ENCODE measurements at regions of chr19 and their contacts with region 1.

Region 1: GRCh38 chr19:11380653-11381534 is 3.2 kb downstream of the EPOR start:
- DNase-seq: peak; percentile 99
- H3K4me3 Mint-ChIP-seq: peak overlapping the region; percentile 76
- H3K27ac Mint-ChIP-seq: peak overlapping the region; percentile 90
- H3K4me1 Mint-ChIP-seq: peaks cover 35% of the 10 kb centered on the region
- H3K27me3 Mint-ChIP-seq: no peaks in the 10 kb centered on the region
- CTCF ChIP-seq: peak; percentile 71

Region 2: DNA sequence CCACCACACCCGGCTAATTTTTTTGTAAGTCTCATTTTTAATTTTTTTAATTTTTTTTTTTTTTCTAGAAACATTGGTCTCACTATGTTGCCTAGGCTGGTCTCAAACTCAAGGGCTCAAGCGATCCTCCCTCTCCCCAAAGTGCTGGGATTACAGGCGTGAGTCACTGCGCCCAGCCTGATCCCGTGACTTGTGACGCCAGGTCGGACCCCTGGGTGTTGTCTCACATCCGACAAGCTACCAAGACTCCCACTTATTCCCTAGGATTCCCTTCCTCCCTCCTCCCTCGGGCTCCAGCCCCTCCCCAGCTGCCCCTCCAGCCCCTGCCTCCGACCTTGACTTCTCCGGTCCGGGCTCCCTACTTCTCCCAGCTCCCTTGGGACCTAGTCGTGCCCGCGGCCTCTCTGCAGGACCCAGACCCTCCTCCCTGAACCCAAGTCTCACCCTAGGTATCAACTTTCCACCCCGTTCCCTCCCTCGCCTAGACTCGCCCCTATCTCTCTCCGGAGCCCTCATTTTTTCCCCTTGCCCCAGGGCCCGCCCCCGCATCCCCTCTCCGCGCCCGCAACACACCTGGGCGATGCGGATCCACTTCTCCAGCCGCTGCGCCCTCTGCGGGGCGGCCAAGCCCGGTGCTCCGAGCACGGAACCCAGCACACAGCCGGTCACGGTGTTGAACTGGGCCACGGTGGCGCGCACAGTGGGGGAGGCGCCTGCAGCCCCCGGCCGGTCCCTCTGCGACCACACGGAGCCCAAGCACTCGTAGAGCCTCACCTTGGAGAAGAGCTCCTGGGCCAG is 25.2 kb after region 1 on chr19:
- CTCF ChIA-PET with region 1: interaction called, 13 read pairs
- POLR2A ChIA-PET with region 1: interaction called, 3 read pairs
- intact Hi-C with region 1: no loop called
- DNase-seq: peak; percentile 49
- H3K4me3 Mint-ChIP-seq: peak overlapping the region; percentile 41
- H3K27ac Mint-ChIP-seq: no peak overlapping the region
- H3K4me1 Mint-ChIP-seq: no peaks in the 10 kb centered on the region
- H3K27me3 Mint-ChIP-seq: no peaks in the 10 kb centered on the region
- CTCF ChIP-seq: peak; percentile 40

Region 3: GRCh38 chr19:11435058-11435832 is 54.4 kb after region 1 on chr19 and contains the starts of genes ODAD3 and PRKCSH:
- CTCF ChIA-PET with region 1: interaction called, 5 read pairs
- POLR2A ChIA-PET with region 1: interaction called, 11 read pairs
- intact Hi-C with region 1: loop called (anchors 2 kb)
- DNase-seq: peak; percentile 100
- H3K4me3 Mint-ChIP-seq: peak within 1 kb of the TSS; percentile 100
- H3K27ac Mint-ChIP-seq: peak within 1 kb of the TSS; percentile 96
- H3K4me1 Mint-ChIP-seq: no peaks in the 10 kb centered on the region
- H3K27me3 Mint-ChIP-seq: no peaks in the 10 kb centered on the region
- CTCF ChIP-seq: peak; percentile 87
- total RNA-seq, gene ODAD3: 0.30 TPM in 1 of 2 replicates, not detected in the other
- total RNA-seq, gene PRKCSH: 224 and 257 TPM in 2 replicates

Region 4: GRCh38 chr19:11482384-11483050 is 101.6 kb after region 1 on chr19:
- CTCF ChIA-PET with region 1: interaction called, 12 read pairs
- POLR2A ChIA-PET with region 1: interaction called, 6 read pairs
- intact Hi-C with region 1: no loop called
- DNase-seq: peak; percentile 70
- H3K4me3 Mint-ChIP-seq: peak overlapping the region; percentile 46
- H3K27ac Mint-ChIP-seq: no peak overlapping the region
- H3K4me1 Mint-ChIP-seq: peaks cover 6% of the 10 kb centered on the region
- H3K27me3 Mint-ChIP-seq: no peaks in the 10 kb centered on the region
- CTCF ChIP-seq: peak; percentile 87

Region 5: GRCh38 chr19:11587302-11587974 is 206.5 kb after region 1 on chr19:
- CTCF ChIA-PET with region 1: interaction called, 9 read pairs
- POLR2A ChIA-PET with region 1: no interaction called
- intact Hi-C with region 1: loop called (anchors 2 kb)
- DNase-seq: peak; percentile 65
- H3K4me3 Mint-ChIP-seq: no peak overlapping the region
- H3K27ac Mint-ChIP-seq: no peak overlapping the region
- H3K4me1 Mint-ChIP-seq: peaks cover 13% of the 10 kb centered on the region
- H3K27me3 Mint-ChIP-seq: no peaks in the 10 kb centered on the region
- CTCF ChIP-seq: peak; percentile 94